ENCODE measurements at regions of chr3 and their contacts with region 1.

Region 1: GRCh38 chr3:132029182-132029902 is 5.5 kb downstream of the CPNE4 start:
- DNase-seq: peak; percentile 53
- ATAC-seq: peak; percentile 99
- H3K4me3 ChIP-seq: no peak overlapping the region
- H3K27ac ChIP-seq: no peak overlapping the region
- H3K4me1 ChIP-seq: no peaks in the 10 kb centered on the region
- H3K27me3 ChIP-seq: peaks cover 0 to 5% of the 10 kb centered on the region in 2 experiments; a peak in 1 of 5 replicates
- CTCF ChIP-seq: peak; percentile 90
- EP300 ChIP-seq: no peak
- POLR2A ChIP-seq: no peak
- RAD21 ChIP-seq: peak; percentile 68

Region 2: DNA sequence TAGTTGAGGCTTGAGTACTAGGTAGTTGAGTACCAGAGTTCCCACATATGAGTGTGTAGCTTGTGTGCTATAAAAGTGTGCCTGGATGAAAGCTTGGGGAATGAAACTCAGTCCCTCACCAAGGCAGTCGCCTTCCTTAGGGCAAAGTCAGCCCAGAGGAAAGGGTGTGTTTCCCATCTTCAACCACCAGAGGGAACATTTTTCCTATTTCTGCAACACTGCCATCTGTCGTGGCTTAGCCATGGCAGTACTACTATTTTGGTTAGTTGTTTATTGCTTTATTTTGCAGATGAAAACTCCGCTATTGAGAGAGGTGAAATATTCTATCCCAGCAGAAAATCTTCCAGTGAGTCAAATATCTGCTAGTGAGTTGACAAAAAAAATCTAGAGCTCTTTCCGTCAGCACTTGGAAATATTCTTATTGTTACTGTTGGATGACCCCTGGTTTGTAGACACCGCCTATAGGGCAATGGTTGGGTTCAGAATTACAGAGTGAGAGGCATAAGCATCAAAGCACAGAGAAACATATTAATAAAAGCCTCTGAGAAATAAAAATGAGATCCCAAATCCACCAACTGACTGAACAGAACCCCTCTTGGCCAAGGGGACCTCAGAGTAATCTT is 234.5 kb before region 1 on chr3:
- CTCF ChIA-PET with region 1: interaction called, 28 read pairs
- POLR2A ChIA-PET with region 1: no interaction called
- in situ Hi-C with region 1: loop called (anchors 5 kb)
- intact Hi-C with region 1: loop called (anchors 1 kb)
- DNase-seq: peak; percentile 24
- ATAC-seq: peak; percentile 88
- H3K4me3 ChIP-seq: no peak overlapping the region
- H3K27ac ChIP-seq: no peak overlapping the region
- H3K4me1 ChIP-seq: no peaks in the 10 kb centered on the region
- H3K27me3 ChIP-seq: no peaks in the 10 kb centered on the region
- CTCF ChIP-seq: peak; percentile 79
- EP300 ChIP-seq: no peak
- POLR2A ChIP-seq: no peak
- RAD21 ChIP-seq: peak; percentile 38; the same call in 1 of the 2 replicates

Region 3: GRCh38 chr3:132006605-132007204 is 22.6 kb before region 1 on chr3:
- CTCF ChIA-PET with region 1: interaction called, 3 read pairs
- POLR2A ChIA-PET with region 1: no interaction called
- in situ Hi-C with region 1: no loop called
- intact Hi-C with region 1: loop called (anchors 1 kb)
- DNase-seq: peak; percentile 25
- ATAC-seq: peak; percentile 53; the same call in 1 of the 3 replicates
- H3K4me3 ChIP-seq: no peak overlapping the region
- H3K27ac ChIP-seq: no peak overlapping the region
- H3K4me1 ChIP-seq: no peaks in the 10 kb centered on the region
- H3K27me3 ChIP-seq: no peaks in the 10 kb centered on the region
- CTCF ChIP-seq: peak; percentile 57
- EP300 ChIP-seq: no peak
- POLR2A ChIP-seq: no peak
- RAD21 ChIP-seq: no peak

Measured in HepG2 (cell line).